ENCODE measurements at regions of chr16 and their contacts with region 1.

Region 1: GRCh38 chr16:56681939-56682702 is at the start of gene MT1X:
- DNase-seq: peak; percentile 96
- ATAC-seq: peak; percentile 96
- H3K4me3 Mint-ChIP-seq: peak within 1 kb of the TSS; percentile 89
- H3K27ac Mint-ChIP-seq: peak within 1 kb of the TSS; percentile 97
- H3K4me1 Mint-ChIP-seq: peaks cover 22% of the 10 kb centered on the region
- H3K27me3 Mint-ChIP-seq: no peaks in the 10 kb centered on the region
- total RNA-seq, gene MT1X: 46.8 to 59.3 TPM

Region 2: DNA sequence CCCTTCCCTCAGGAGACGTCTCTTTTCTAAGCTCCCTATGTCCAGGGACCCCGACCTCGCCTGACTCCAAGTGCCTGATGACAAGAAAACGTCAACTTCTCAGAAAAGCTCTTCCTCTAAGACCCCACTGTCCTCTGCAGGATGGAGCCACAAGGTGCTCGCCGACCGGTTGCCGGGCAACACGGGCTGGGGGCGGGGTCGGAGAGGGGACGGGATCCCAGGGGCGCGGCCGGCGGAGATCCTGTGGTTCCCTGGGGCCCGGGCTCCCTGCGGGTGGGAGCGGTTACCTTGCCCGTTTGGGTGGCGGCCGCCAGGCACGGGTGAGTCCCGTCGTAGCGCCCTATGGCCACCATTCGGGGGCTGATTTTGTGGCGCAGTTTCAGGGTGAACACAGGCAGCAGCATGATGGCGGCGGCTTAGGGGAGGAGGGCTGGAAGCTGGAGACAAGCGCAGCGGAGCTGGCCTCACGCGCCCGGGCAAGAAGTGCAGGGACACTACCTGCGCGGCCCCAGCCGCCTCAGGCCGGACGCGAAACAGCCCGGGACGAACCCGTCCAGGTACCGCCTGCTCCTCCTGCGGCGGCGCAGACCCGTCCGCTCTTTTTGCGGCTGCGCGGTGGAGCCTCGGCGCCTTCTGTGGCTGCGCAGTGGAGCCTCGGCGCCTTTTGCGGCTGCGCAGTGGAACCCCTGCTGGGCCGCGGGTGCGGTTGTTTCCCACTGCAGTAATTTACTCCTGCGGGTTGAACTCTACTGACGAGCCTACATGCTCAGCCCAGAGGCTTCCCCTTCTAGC is 162.5 kb before region 1 on chr16 and contains the start of gene BBS2:
- CTCF ChIA-PET with region 1: no interaction called
- POLR2A ChIA-PET with region 1: no interaction called
- intact Hi-C with region 1: loop called in 1 of 2 experiments (anchors 1 kb)
- DNase-seq: peak; percentile 93
- ATAC-seq: peak; percentile 90
- H3K4me3 Mint-ChIP-seq: peak within 1 kb of the TSS; percentile 79
- H3K27ac Mint-ChIP-seq: peak within 1 kb of the TSS; percentile 61
- H3K4me1 Mint-ChIP-seq: peaks cover 32% of the 10 kb centered on the region
- H3K27me3 Mint-ChIP-seq: no peaks in the 10 kb centered on the region
- total RNA-seq, gene BBS2: 15.4 to 23.2 TPM

Region 3: DNA sequence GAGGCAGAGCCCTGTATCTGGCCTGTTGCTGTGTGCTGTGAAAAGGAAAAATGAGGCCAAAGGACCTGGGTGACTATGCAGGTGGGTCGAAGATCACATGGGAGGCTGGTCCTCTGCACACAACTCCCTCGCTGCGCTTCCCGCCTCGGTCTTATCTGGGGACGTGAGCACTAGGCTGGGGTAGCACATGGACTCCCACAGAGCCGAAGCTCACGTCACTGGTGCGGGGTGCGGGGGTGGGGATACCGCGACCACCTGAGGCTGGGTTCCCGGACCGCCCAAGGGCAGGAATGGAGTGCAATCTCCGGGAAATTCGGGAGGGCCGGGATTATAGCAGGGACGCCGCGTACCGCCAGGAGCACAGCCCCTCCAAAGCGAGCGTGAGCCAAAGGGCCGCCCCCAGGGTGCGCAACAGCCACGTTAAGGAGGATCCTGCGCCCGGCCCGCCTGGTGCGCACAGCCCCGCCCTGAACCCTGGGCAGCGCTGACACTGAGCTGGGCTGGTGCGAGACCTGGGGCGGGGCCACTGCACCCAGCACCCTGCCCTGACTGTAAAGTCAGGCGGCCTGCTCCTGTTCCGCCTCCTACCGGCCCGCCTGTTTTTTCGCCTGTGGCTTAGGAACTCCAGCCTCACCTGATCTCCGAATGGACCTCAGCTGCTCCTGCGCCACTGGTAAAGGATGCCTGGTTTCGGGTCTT is 38.9 kb before region 1 on chr16:
- CTCF ChIA-PET with region 1: interaction called, 3 read pairs
- POLR2A ChIA-PET with region 1: no interaction called
- intact Hi-C with region 1: loop called (anchors 1 kb)
- DNase-seq: peak; percentile 90
- ATAC-seq: peak; percentile 100
- H3K4me3 Mint-ChIP-seq: peak overlapping the region; percentile 39
- H3K27ac Mint-ChIP-seq: peak overlapping the region; percentile 39
- H3K4me1 Mint-ChIP-seq: peaks cover 20% of the 10 kb centered on the region
- H3K27me3 Mint-ChIP-seq: peaks cover 43% of the 10 kb centered on the region

Region 4: GRCh38 chr16:56667581-56668571 is 14.2 kb before region 1 on chr16 and contains the start of gene MT1G:
- CTCF ChIA-PET with region 1: interaction called, 7 read pairs
- POLR2A ChIA-PET with region 1: interaction called, 4 read pairs
- intact Hi-C with region 1: loop called (anchors 1 to 2 kb)
- DNase-seq: peak; percentile 69
- ATAC-seq: peak; percentile 70
- H3K4me3 Mint-ChIP-seq: peak within 1 kb of the TSS; percentile 50
- H3K27ac Mint-ChIP-seq: no peak within 1 kb of the TSS
- H3K4me1 Mint-ChIP-seq: peaks cover 19% of the 10 kb centered on the region
- H3K27me3 Mint-ChIP-seq: peaks cover 63% of the 10 kb centered on the region
- total RNA-seq, gene MT1G: 14.7 TPM

Region 5: DNA sequence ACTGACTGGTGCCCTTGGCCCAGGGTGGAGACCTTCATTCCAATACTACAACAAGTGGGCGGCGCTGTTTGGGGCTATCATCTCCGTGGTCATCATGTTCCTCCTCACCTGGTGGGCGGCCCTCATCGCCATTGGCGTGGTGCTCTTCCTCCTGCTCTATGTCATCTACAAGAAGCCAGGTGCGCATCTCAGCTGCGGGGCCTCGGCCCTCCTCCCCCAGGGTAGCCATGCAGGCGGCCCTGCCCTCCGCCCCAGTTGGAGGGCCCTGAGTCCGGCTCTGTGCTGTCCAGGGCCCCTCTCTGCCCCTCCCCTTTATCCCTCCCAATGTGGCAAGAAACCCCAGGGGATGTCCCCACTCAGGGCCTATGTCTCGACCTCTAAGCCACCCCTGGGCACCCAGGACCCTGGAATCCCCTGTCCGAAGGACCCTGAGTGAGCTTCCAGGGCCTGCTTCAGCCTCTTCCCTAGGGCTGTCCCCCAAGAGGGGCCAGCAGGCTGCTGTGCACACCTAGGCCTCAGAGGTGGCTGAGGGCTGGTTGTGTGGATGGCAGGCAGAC is 202.0 kb after region 1 on chr16:
- CTCF ChIA-PET with region 1: no interaction called
- POLR2A ChIA-PET with region 1: no interaction called
- intact Hi-C with region 1: no loop called
- DNase-seq: no peak
- ATAC-seq: no peak
- H3K4me3 Mint-ChIP-seq: no peak overlapping the region
- H3K27ac Mint-ChIP-seq: no peak overlapping the region
- H3K4me1 Mint-ChIP-seq: no peaks in the 10 kb centered on the region
- H3K27me3 Mint-ChIP-seq: no peaks in the 10 kb centered on the region

Measured in activated CD4-positive, alpha-beta T cell treated with anti-CD3 and anti-CD28 coated beads for 36 hours (primary cell).